PC-3 (cell line): ENCODE measurements at regions of chr3 and their contacts with region 1.

Region 1: DNA sequence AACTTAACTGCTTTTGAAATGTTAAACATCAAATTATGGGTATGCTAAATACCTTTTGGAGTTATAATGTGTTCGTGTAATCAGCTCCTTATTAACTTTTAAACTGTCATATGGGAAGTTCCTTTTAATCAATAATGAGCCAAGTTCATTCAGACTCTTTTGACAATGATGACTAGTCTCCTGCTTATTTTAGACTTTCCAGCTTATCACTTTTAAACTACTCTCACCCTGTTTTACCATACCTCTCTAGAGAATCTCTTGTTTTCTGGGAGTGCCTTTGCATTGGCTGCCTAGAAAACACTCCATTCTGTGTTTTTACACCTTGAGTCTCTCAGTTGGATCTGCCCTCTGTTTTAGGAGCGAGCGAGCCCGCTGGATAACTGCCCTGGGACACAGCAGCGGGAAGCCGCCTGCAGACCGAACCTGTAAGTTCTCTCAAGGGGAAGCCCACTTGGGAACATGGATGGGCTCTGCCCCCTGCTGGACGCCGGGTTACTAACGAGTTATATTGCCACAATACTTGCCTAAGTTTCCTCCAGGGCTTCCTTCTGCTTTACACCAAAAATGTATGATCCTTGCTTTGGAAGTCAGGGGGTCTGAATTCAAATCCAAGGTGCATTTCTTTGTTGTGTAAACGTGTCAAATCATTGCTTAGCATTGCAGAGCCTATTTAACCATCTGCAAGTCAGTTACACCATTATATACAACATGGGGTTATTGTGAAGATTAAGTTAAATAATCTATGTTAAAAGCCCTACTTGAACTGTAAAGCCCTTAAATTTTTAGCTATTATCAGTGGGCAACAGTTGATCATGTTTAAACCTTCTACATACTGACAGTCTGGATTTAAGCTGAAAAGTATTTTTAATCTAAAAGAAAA is 71.3 kb downstream of the DHX36 start:
- DNase-seq: peak; percentile 92
- ATAC-seq: peak; percentile 97
- H3K4me3 ChIP-seq: no peak overlapping the region
- H3K27ac ChIP-seq: no peak overlapping the region
- H3K4me1 ChIP-seq: no peaks in the 10 kb centered on the region
- H3K27me3 ChIP-seq: no peaks in the 10 kb centered on the region
- CTCF ChIP-seq: peak; percentile 96

Region 2: DNA sequence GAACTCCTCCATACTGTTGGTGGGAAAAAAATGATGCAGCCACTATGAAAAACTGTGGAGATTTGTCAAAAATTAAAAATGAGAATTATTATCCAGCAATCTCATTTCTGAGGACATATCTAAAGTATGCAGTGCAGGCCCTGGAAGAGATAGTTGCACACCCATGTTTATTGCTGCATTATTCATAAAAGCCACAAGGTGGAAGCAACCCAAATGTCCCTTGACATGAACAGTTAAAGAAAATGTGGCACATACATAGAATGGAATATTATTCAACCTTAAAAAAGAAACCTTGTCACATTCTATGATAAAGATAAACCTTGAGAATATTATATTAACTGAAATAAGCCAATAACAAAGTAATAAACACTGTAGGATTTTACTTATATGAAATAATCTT is 212.7 kb before region 1 on chr3:
- CTCF ChIA-PET with region 1: no interaction called
- POLR2A ChIA-PET with region 1: no interaction called
- intact Hi-C with region 1: loop called (anchors 1 kb)
- DNase-seq: peak; percentile 69
- ATAC-seq: peak; percentile 93
- H3K4me3 ChIP-seq: no peak overlapping the region
- H3K27ac ChIP-seq: no peak overlapping the region
- H3K4me1 ChIP-seq: no peaks in the 10 kb centered on the region
- H3K27me3 ChIP-seq: 0 out of 2 replicates have a peak, but pooled peaks cover 4% of the 10 kb centered on the region
- CTCF ChIP-seq: peak; percentile 68

Region 3: DNA sequence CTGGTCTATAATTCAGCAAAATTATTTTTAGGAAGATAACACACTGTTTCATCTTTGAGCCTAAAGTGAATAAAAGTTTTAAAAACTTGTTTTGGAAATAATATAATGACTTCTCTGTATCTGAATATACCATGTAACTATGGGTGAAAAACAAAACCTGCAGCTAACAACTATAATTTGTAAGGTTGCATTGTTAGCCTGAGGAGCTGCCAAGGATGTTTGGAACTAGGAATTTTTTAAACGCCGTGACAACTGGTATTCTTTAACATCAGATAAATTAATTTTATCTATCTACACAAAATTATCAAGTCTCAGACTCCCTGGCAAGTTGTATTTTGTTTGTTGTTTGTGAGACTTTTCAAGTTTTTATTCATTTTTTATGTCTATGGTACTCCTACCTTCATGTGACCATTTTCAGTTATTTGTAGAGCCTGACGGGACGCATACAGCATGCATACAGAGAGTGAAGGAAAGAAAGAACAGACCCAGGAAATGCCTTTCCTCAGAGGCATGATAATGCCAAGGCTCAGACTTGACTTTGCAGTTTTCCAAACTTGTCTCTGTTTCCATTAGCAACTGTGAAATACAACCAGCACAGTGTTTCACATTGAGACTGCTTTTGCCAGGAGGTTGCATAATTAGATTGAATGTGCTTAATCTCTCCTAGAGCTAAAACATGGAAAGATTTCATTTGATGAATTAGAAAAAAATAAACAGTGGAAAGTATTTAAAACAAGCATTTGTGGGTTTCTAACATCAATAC is 192.6 kb before region 1 on chr3:
- CTCF ChIA-PET with region 1: no interaction called
- POLR2A ChIA-PET with region 1: interaction called, 15 read pairs
- intact Hi-C with region 1: no loop called
- DNase-seq: no peak
- ATAC-seq: no peak
- H3K4me3 ChIP-seq: no peak overlapping the region
- H3K27ac ChIP-seq: no peak overlapping the region
- H3K4me1 ChIP-seq: no peaks in the 10 kb centered on the region
- H3K27me3 ChIP-seq: no peaks in the 10 kb centered on the region
- CTCF ChIP-seq: no peak

Region 4: DNA sequence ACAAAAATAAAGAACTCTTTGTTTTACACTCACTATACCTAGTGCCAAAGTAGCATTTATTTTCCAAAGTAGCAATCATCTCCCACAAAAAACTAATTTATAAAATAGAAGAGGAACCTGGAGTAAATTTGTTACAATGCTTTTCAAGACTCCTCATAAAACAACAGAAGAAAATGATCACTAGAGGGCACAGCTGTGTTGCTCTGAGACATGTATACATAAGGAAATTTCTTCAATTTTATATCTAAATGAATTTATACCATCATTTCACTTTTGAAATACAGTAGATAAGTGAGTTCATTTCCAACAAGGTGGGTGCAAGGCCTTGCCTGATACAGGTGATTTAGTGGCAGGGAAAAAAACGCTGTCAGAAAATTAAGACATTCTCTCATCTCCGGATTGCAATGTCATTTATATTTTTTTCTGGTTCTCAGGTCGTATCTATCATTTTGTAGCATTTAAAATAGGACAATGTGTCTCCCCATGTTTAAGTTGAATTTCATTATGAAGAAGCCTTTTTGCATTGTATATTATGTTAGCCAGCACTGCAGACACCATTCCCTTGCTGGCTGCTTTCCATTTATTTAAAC is 157.1 kb before region 1 on chr3:
- CTCF ChIA-PET with region 1: no interaction called
- POLR2A ChIA-PET with region 1: interaction called, 3 read pairs
- intact Hi-C with region 1: loop called (anchors 1 kb)
- DNase-seq: peak; percentile 55
- ATAC-seq: peak; percentile 84
- H3K4me3 ChIP-seq: no peak overlapping the region
- H3K27ac ChIP-seq: no peak overlapping the region
- H3K4me1 ChIP-seq: no peaks in the 10 kb centered on the region
- H3K27me3 ChIP-seq: no peaks in the 10 kb centered on the region
- CTCF ChIP-seq: peak; percentile 80

Region 5: GRCh38 chr3:154120961-154121700 is 131.9 kb before region 1 on chr3 and contains the start of gene ARHGEF26:
- CTCF ChIA-PET with region 1: interaction called, 10 read pairs
- POLR2A ChIA-PET with region 1: no interaction called
- intact Hi-C with region 1: loop called (anchors 10 kb)
- DNase-seq: peak; percentile 75
- ATAC-seq: peak; percentile 66
- H3K4me3 ChIP-seq: peak within 1 kb of the TSS; percentile 93
- H3K27ac ChIP-seq: no peak within 1 kb of the TSS
- H3K4me1 ChIP-seq: peaks cover 32% of the 10 kb centered on the region
- H3K27me3 ChIP-seq: no peaks in the 10 kb centered on the region
- CTCF ChIP-seq: no peak
- total RNA-seq, gene ARHGEF26: 4.7 and 5.0 TPM in 2 replicates

Region 6: GRCh38 chr3:154552338-154552737 is 299.3 kb after region 1 on chr3:
- CTCF ChIA-PET with region 1: no interaction called
- POLR2A ChIA-PET with region 1: no interaction called
- intact Hi-C with region 1: no loop called
- DNase-seq: peak; percentile 9
- ATAC-seq: no peak
- H3K4me3 ChIP-seq: no peak overlapping the region
- H3K27ac ChIP-seq: no peak overlapping the region
- H3K4me1 ChIP-seq: no peaks in the 10 kb centered on the region
- H3K27me3 ChIP-seq: no peaks in the 10 kb centered on the region
- CTCF ChIP-seq: peak; percentile 46